CD4-positive, alpha-beta memory T cell (primary cell): ENCODE measurements at regions of chr12 and their contacts with region 1.

Region 1: DNA sequence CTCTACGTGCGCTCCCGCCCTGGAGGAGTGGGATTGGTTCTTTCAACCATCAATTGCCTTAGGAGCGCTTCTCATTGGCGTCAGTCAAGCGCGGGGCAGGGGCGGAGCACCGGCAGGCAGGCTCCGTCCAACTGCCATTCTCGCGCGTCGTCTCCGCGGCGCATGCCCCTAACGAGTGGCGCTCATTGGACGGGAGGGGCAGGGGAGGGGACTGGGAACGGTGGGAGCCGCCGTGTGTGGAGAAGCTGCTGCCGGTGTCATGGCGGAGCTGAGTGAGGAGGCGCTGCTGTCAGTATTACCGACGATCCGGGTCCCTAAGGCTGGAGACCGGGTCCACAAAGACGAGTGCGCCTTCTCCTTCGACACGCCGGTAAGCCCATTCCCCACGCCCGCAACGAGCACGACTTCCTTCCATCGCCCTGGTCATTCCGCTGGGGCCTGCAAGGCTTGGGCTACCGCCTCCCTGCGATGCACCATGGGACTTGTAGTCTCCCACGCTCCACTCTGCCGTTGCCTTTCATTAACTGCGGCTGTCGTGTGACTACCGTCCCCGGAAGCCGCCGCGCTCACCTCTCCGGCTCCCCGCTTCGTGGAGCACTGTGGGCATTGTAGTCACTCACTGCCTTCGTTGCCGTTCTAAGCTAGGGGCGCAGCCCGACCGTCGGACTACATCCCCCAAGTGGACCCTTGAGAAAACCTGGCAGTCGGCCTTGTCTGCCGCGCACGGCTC is at the start of gene USP5:
- DNase-seq: peak; percentile 99 to 100 (median 99)
- H3K4me3 ChIP-seq: peak within 1 kb of the TSS; percentile 62 to 97
- H3K4me3 Mint-ChIP-seq: peak within 1 kb of the TSS; percentile 88 to 99 (median 95)
- H3K27ac ChIP-seq: peak within 1 kb of the TSS; percentile 92
- H3K27ac Mint-ChIP-seq: peak within 1 kb of the TSS; percentile 82 to 100 (median 99)
- H3K4me1 ChIP-seq: peaks cover 37% of the 10 kb centered on the region
- H3K4me1 Mint-ChIP-seq: peaks cover 18 to 36% (median 27%) of the 10 kb centered on the region in 4 donors
- H3K27me3 ChIP-seq: no peaks in the 10 kb centered on the region
- H3K27me3 Mint-ChIP-seq: no peaks in the 10 kb centered on the region
- total RNA-seq, gene USP5: 65.2 to 69.3 TPM

Region 2: GRCh38 chr12:5665615-5666014 is 1186.5 kb before region 1 on chr12:
- CTCF ChIA-PET with region 1: no interaction called
- POLR2A ChIA-PET with region 1: no interaction called
- intact Hi-C with region 1: no loop called
- DNase-seq: no peak
- H3K4me3 ChIP-seq: no peak overlapping the region
- H3K4me3 Mint-ChIP-seq: no peak overlapping the region
- H3K27ac ChIP-seq: no peak overlapping the region
- H3K27ac Mint-ChIP-seq: no peak overlapping the region
- H3K4me1 ChIP-seq: no peaks in the 10 kb centered on the region
- H3K4me1 Mint-ChIP-seq: no peaks in the 10 kb centered on the region
- H3K27me3 ChIP-seq: no peaks in the 10 kb centered on the region
- H3K27me3 Mint-ChIP-seq: no peaks in the 10 kb centered on the region

Region 3: GRCh38 chr12:6470375-6471163 is 381.5 kb before region 1 on chr12 and contains the start of gene VAMP1:
- CTCF ChIA-PET with region 1: no interaction called
- POLR2A ChIA-PET with region 1: interaction called, 10 read pairs
- intact Hi-C with region 1: no loop called
- DNase-seq: peak; percentile 95 to 99 (median 96)
- H3K4me3 ChIP-seq: peak within 1 kb of the TSS; percentile 74 to 76
- H3K4me3 Mint-ChIP-seq: peak within 1 kb of the TSS; percentile 86 to 97 (median 92)
- H3K27ac ChIP-seq: peak within 1 kb of the TSS; percentile 64
- H3K27ac Mint-ChIP-seq: peak within 1 kb of the TSS; percentile 90 to 97 (median 94)
- H3K4me1 ChIP-seq: peaks cover 46% of the 10 kb centered on the region
- H3K4me1 Mint-ChIP-seq: peaks cover 35 to 52% (median 48%) of the 10 kb centered on the region in 4 donors
- H3K27me3 ChIP-seq: no peaks in the 10 kb centered on the region
- H3K27me3 Mint-ChIP-seq: no peaks in the 10 kb centered on the region
- total RNA-seq, gene VAMP1: 97.7 to 101 TPM

Region 4: DNA sequence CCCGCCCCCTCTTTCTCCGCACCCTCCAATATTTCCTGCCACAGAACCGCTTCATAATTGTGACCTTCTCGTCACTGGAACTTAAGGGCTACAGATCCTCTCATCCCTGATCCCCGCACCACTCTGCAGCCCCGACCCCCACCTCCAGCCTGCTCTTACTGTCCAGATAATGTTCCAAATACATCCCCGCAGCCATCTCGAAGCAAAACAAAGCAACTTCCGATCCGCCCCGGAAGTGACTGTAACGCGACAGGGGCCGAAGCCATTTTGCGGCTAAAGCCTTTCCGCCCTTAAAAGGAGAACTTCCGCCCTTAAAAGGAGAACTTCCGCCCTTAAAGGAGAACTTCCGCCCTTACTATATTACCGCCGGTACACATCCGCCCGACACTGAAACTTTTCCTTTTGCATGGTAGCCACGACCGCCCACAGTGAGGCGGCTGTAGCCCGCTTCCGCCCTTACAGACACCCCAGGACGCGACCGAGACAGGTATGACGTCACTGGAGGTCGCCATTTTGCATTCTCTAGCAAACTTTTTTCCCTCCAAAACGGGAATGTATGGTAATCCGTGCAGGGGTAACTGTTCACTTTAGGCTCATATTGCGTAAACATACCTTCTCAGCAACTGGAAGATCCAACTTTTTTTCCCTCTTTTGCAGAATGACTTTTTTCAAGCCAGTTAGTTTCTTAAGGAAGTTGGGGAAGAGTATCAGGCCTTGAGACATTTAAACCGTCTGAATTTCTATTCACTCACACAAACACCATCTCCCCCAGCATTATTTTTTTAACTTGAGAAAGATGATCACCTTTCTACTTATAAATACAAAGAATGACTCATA is 189.0 kb before region 1 on chr12 and contains the start of gene ING4:
- CTCF ChIA-PET with region 1: no interaction called
- POLR2A ChIA-PET with region 1: interaction called, 3 read pairs
- intact Hi-C with region 1: loop called (anchors 1 kb)
- DNase-seq: peak; percentile 95 to 99 (median 98)
- H3K4me3 ChIP-seq: peak within 1 kb of the TSS; percentile 97
- H3K4me3 Mint-ChIP-seq: peak within 1 kb of the TSS; percentile 91 to 97 (median 94)
- H3K27ac ChIP-seq: peak within 1 kb of the TSS; percentile 79
- H3K27ac Mint-ChIP-seq: peak within 1 kb of the TSS; percentile 88 to 98 (median 98)
- H3K4me1 ChIP-seq: peaks cover 21% of the 10 kb centered on the region
- H3K4me1 Mint-ChIP-seq: peaks cover 20 to 42% (median 30%) of the 10 kb centered on the region in 4 donors
- H3K27me3 ChIP-seq: no peaks in the 10 kb centered on the region
- H3K27me3 Mint-ChIP-seq: no peaks in the 10 kb centered on the region
- total RNA-seq, gene ING4: 82.3 to 83.5 TPM

Region 5: GRCh38 chr12:6764011-6764828 is 87.9 kb before region 1 on chr12:
- CTCF ChIA-PET with region 1: interaction called, 15 read pairs
- POLR2A ChIA-PET with region 1: interaction called, 7 read pairs
- intact Hi-C with region 1: no loop called
- DNase-seq: peak; percentile 47 to 79 (median 56)
- H3K4me3 ChIP-seq: no peak overlapping the region
- H3K4me3 Mint-ChIP-seq: peak overlapping the region; percentile 3 to 72 (median 62)
- H3K27ac ChIP-seq: no peak overlapping the region
- H3K27ac Mint-ChIP-seq: peak overlapping the region in 2 of 7 donors; percentile 31 to 46
- H3K4me1 ChIP-seq: peaks cover 27% of the 10 kb centered on the region
- H3K4me1 Mint-ChIP-seq: peaks cover 15 to 40% (median 28%) of the 10 kb centered on the region in 4 donors
- H3K27me3 ChIP-seq: peaks cover 15% of the 10 kb centered on the region
- H3K27me3 Mint-ChIP-seq: peaks cover 16 to 25% of the 10 kb centered on the region in 2 donors

Region 6: DNA sequence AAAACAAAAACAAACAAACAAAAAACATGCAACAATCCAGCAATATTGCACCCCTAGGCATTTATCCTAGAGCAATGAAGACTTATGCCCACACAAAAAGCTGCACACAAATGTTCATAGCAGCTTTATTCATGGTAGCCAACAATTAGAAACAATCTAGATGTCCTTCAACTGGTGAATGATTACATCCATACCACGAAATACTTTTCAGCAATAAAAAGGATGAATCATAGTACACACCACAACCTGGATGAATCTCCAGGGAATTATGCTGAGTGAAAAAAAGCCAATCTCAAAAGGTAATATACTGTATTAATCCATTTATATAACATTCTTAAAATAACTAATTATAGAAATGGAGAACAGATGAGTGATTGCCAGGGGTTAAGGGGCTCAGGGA is 44.9 kb before region 1 on chr12:
- CTCF ChIA-PET with region 1: no interaction called
- POLR2A ChIA-PET with region 1: no interaction called
- intact Hi-C with region 1: no loop called
- DNase-seq: no peak
- H3K4me3 ChIP-seq: no peak overlapping the region
- H3K4me3 Mint-ChIP-seq: no peak overlapping the region
- H3K27ac ChIP-seq: no peak overlapping the region
- H3K27ac Mint-ChIP-seq: peak overlapping the region in 1 of 7 donors; percentile 72
- H3K4me1 ChIP-seq: no peaks in the 10 kb centered on the region
- H3K4me1 Mint-ChIP-seq: peaks cover 0 to 24% (median 12%) of the 10 kb centered on the region in 4 donors
- H3K27me3 ChIP-seq: no peaks in the 10 kb centered on the region
- H3K27me3 Mint-ChIP-seq: no peaks in the 10 kb centered on the region

Region 7: GRCh38 chr12:6867413-6868210 is 15.5 kb after region 1 on chr12 and contains the start of gene TPI1:
- CTCF ChIA-PET with region 1: interaction called, 102 read pairs
- POLR2A ChIA-PET with region 1: interaction called, 270 read pairs
- intact Hi-C with region 1: loop called (anchors 1 kb)
- DNase-seq: peak; percentile 59 to 68 (median 62)
- H3K4me3 ChIP-seq: peak within 1 kb of the TSS; percentile 36 to 67
- H3K4me3 Mint-ChIP-seq: peak within 1 kb of the TSS; percentile 89 to 96 (median 92)
- H3K27ac ChIP-seq: peak within 1 kb of the TSS; percentile 69
- H3K27ac Mint-ChIP-seq: peak within 1 kb of the TSS; percentile 91 to 97 (median 93)
- H3K4me1 ChIP-seq: peaks cover 51% of the 10 kb centered on the region
- H3K4me1 Mint-ChIP-seq: peaks cover 33 to 58% (median 48%) of the 10 kb centered on the region in 4 donors
- H3K27me3 ChIP-seq: no peaks in the 10 kb centered on the region
- H3K27me3 Mint-ChIP-seq: no peaks in the 10 kb centered on the region
- total RNA-seq, gene TPI1: 155 to 164 TPM

Region 8: GRCh38 chr12:6914246-6914946 is 62.3 kb after region 1 on chr12 and contains the start of gene ENO2:
- CTCF ChIA-PET with region 1: no interaction called
- POLR2A ChIA-PET with region 1: interaction called, 22 read pairs
- intact Hi-C with region 1: no loop called
- DNase-seq: peak; percentile 83 to 93 (median 85)
- H3K4me3 ChIP-seq: peak within 1 kb of the TSS; percentile 69 to 76
- H3K4me3 Mint-ChIP-seq: peak within 1 kb of the TSS; percentile 90 to 98 (median 96)
- H3K27ac ChIP-seq: peak within 1 kb of the TSS; percentile 77
- H3K27ac Mint-ChIP-seq: peak within 1 kb of the TSS; percentile 88 to 98 (median 96)
- H3K4me1 ChIP-seq: peaks cover 29% of the 10 kb centered on the region
- H3K4me1 Mint-ChIP-seq: peaks cover 12 to 44% (median 27%) of the 10 kb centered on the region in 4 donors
- H3K27me3 ChIP-seq: no peaks in the 10 kb centered on the region
- H3K27me3 Mint-ChIP-seq: no peaks in the 10 kb centered on the region
- total RNA-seq, gene ENO2: 187 to 190 TPM

Region 9: GRCh38 chr12:7018350-7019042 is 166.4 kb after region 1 on chr12 and contains the start of gene LPCAT3:
- CTCF ChIA-PET with region 1: no interaction called
- POLR2A ChIA-PET with region 1: interaction called, 5 read pairs
- intact Hi-C with region 1: loop called (anchors 1 kb)
- DNase-seq: peak; percentile 98 to 99 (median 98)
- H3K4me3 ChIP-seq: peak within 1 kb of the TSS; percentile 72 to 76
- H3K4me3 Mint-ChIP-seq: peak within 1 kb of the TSS; percentile 86 to 99 (median 95)
- H3K27ac ChIP-seq: peak within 1 kb of the TSS; percentile 85
- H3K27ac Mint-ChIP-seq: peak within 1 kb of the TSS; percentile 90 to 98 (median 95)
- H3K4me1 ChIP-seq: peaks cover 23% of the 10 kb centered on the region
- H3K4me1 Mint-ChIP-seq: peaks cover 18 to 37% (median 24%) of the 10 kb centered on the region in 4 donors
- H3K27me3 ChIP-seq: no peaks in the 10 kb centered on the region
- H3K27me3 Mint-ChIP-seq: no peaks in the 10 kb centered on the region
- total RNA-seq, gene LPCAT3: 18.3 to 21.6 TPM

Region 10: DNA sequence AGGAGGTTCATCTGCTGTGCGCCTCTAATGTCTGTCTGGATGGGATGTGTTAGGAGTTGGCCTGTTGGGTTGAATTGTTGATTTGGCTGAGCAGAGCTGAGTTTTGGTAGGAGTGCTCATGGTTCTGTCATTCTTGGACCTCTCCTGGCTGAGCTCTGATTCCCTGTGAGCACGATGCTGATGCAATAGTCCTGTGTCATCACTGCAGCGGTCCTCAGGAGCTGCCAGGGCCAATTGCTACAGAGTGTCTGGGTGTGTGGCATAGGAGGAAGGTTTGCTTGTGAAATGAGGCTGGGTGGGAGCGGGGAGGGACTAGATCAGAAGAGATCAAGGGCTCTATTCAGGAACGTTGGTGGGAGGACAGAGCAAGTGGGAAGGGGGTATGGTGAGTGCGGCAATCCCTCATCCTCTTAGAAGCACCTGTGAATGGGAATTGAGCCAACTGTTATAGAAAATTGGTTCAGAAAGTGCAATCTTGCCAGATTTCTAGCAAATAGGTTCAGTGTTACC is 358.6 kb after region 1 on chr12:
- CTCF ChIA-PET with region 1: no interaction called
- POLR2A ChIA-PET with region 1: no interaction called
- intact Hi-C with region 1: no loop called
- DNase-seq: no peak
- H3K4me3 ChIP-seq: no peak overlapping the region
- H3K4me3 Mint-ChIP-seq: no peak overlapping the region
- H3K27ac ChIP-seq: no peak overlapping the region
- H3K27ac Mint-ChIP-seq: peak overlapping the region in 2 of 7 donors; percentile 37 to 59
- H3K4me1 ChIP-seq: no peaks in the 10 kb centered on the region
- H3K4me1 Mint-ChIP-seq: no peaks in the 10 kb centered on the region
- H3K27me3 ChIP-seq: no peaks in the 10 kb centered on the region
- H3K27me3 Mint-ChIP-seq: no peaks in the 10 kb centered on the region